Heart left ventricle (tissue), 16 donors: ENCODE measurements at regions of chr3 and their contacts with region 1.

Region 1: DNA sequence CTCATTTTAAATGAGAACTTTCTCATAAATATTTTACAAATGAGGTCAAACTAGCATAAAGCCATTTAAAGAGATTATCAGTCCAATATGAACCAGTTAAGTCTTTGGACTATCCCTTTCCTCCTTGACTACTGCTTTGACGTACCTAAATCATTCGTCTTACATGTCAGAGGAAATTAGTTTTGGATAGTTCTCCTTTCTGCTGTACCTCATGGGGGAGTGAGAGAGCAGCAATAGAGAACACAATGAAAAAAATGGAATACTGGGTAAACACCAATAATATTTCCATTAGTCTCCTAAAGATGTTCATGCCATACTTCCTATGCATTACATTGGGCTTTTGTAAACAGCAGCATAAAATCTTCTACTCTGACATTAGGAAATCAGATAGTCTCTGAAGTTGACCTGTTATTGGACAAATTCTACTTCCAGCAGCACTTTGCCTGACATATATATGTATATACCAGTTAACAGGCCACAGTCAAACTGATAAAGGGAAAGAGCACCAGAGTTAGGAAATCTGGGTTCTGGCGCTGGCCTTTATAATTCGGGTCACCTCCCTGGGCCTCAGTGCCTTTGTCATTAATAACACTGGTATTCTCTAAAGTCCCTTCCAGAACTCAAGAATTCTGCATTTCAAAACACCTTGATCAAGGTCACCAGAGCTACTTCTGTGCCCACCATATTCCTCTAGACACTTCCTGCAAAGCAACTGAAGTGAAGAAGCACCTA is 26.8 kb downstream of the TIMMDC1 start:
- DNase-seq: no peak
- ATAC-seq: peak in 3 of 4 donors; percentile 37 to 47 (median 45)
- H3K4me3 ChIP-seq: no peak overlapping the region
- H3K27ac ChIP-seq: peak overlapping the region in 7 of 12 donors; percentile 2 to 50 (median 6)
- H3K4me1 ChIP-seq: peaks cover 0 to 15% (median 0%) of the 10 kb centered on the region in 12 donors
- H3K27me3 ChIP-seq: no peaks in the 10 kb centered on the region
- CTCF ChIP-seq: peak in 11 of 12 donors; percentile 23 to 69 (median 50)
- POLR2A ChIP-seq: no peak

Region 2: GRCh38 chr3:119637679-119638525 is 112.8 kb after region 1 on chr3:
- intact Hi-C with region 1: loop called in 2 of 10 experiments (anchors 5 kb)
- DNase-seq: no peak
- ATAC-seq: peak; percentile 18 to 69 (median 29)
- H3K4me3 ChIP-seq: peak overlapping the region in 4 of 12 donors; percentile 4 to 12 (median 7)
- H3K27ac ChIP-seq: peak overlapping the region; percentile 69 to 97 (median 85)
- H3K4me1 ChIP-seq: peaks cover 3 to 73% (median 46%) of the 10 kb centered on the region in 12 donors
- H3K27me3 ChIP-seq: no peaks in the 10 kb centered on the region
- CTCF ChIP-seq: no peak
- POLR2A ChIP-seq: no peak